Calu3 (cell line): ENCODE measurements at regions of chr5 and their contacts with region 1.

Region 1: GRCh38 chr5:177390363-177391300 is 6.4 kb downstream of the SLC34A1 start:
- DNase-seq: peak; percentile 95
- H3K4me3 Mint-ChIP-seq: peak overlapping the region; percentile 51
- H3K27ac Mint-ChIP-seq: peak overlapping the region; percentile 82
- H3K4me1 Mint-ChIP-seq: peaks cover 38% of the 10 kb centered on the region
- H3K27me3 Mint-ChIP-seq: no peaks in the 10 kb centered on the region
- CTCF ChIP-seq: peak; percentile 99

Region 2: DNA sequence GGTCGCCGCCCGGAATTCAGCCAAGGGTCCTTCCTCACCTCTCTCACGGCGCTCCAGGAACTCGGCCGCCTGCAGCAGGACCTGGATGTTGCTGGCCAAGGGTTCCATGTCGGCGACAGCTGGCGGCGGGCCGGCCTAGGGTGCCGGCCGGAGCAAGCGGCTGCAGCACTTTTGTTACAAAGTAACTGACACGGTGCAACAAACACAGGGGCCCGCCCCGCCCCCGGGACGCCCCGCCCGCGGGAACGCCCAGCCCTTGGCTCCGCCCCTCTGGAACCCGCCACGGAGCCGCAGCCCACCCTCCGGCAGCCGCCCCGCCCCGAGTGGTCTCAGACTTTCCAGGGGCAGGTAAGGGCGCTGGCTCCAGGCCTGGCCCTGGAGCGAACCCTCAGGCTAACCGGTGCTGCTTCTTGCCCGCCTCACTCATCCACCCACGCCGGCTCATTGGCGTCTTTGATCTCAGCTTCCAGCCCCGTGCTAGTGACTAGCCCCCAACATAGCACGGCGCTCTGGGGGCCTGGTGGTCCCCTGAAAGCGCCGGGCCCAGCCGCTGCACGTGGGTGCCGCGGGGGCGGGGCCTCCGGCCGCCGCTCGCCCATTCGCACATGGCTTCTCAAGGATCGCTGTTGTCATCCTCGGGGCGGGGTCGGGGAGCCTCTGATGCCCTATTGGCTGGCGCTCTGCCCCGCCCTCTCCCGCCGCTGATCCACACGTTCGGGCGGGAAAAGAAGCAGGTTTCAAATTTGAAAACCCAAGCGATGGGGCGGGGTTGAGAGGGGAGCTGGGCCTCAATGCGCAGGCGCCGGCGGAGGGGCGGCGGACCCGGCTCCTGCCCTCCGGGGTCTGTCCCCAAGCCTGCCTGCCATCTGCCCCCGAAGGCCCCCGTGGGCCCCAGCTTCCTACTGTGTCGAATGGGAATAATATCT is 78.6 kb before region 1 on chr5 and contains the start of gene MXD3:
- CTCF ChIA-PET with region 1: interaction called, 18 read pairs
- intact Hi-C with region 1: no loop called
- DNase-seq: peak; percentile 99
- H3K4me3 Mint-ChIP-seq: peak within 1 kb of the TSS; percentile 71
- H3K27ac Mint-ChIP-seq: peak within 1 kb of the TSS; percentile 79
- H3K4me1 Mint-ChIP-seq: peaks cover 42% of the 10 kb centered on the region
- H3K27me3 Mint-ChIP-seq: no peaks in the 10 kb centered on the region
- CTCF ChIP-seq: no peak
- total RNA-seq, gene MXD3: 24.3 and 36.3 TPM in 2 replicates

Region 3: GRCh38 chr5:177351385-177352329 is 39.0 kb before region 1 on chr5 and contains the start of gene LMAN2:
- CTCF ChIA-PET with region 1: interaction called, 11 read pairs
- intact Hi-C with region 1: no loop called
- DNase-seq: peak; percentile 94
- H3K4me3 Mint-ChIP-seq: peak within 1 kb of the TSS; percentile 86
- H3K27ac Mint-ChIP-seq: peak within 1 kb of the TSS; percentile 96
- H3K4me1 Mint-ChIP-seq: peaks cover 57% of the 10 kb centered on the region
- H3K27me3 Mint-ChIP-seq: no peaks in the 10 kb centered on the region
- CTCF ChIP-seq: no peak
- total RNA-seq, gene LMAN2: 278 and 305 TPM in 2 replicates

Region 4: DNA sequence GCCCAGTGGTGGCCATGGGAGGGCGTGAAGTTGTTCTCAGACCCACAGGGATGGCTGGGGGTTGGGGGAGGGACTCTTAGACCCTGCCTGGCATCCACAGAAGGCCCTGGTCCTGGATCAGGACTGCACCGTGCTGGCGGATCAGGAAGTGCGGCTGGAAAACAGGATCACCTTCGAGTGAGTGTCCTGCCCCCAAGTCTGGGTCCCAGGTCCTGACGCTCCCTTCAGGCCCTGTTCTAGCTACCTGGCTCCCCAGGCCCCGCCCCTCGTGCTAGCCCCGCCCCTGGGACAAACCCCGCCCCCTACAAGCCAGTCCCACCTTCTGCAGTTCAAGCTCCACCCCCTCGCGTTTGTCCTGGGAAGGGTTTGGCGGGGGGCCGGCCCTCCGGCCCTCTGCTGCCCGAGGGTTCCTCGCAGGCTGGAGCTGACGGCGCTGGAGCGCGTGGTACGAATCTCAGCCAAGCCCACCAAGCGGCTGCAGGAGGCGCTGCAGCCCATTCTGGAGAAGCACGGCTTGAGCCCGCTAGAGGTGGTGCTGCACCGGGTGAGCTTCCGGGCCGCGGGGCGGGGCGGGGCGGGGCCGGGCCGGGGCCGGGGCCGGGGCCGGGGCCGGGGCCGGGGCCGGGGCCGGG is 20.0 kb before region 1 on chr5:
- CTCF ChIA-PET with region 1: interaction called, 46 read pairs
- intact Hi-C with region 1: no loop called
- DNase-seq: peak; percentile 78
- H3K4me3 Mint-ChIP-seq: peak overlapping the region; percentile 53
- H3K27ac Mint-ChIP-seq: no peak overlapping the region
- H3K4me1 Mint-ChIP-seq: peaks cover 20% of the 10 kb centered on the region
- H3K27me3 Mint-ChIP-seq: no peaks in the 10 kb centered on the region
- CTCF ChIP-seq: peak; percentile 16

Region 5: GRCh38 chr5:177403792-177404640 is 13.4 kb after region 1 on chr5:
- CTCF ChIA-PET with region 1: interaction called, 94 read pairs
- intact Hi-C with region 1: no loop called
- DNase-seq: peak; percentile 92
- H3K4me3 Mint-ChIP-seq: peak overlapping the region; percentile 77
- H3K27ac Mint-ChIP-seq: peak overlapping the region; percentile 67
- H3K4me1 Mint-ChIP-seq: peaks cover 9% of the 10 kb centered on the region
- H3K27me3 Mint-ChIP-seq: no peaks in the 10 kb centered on the region
- CTCF ChIP-seq: peak; percentile 90

Region 6: GRCh38 chr5:177446200-177447065 is 55.8 kb after region 1 on chr5 and contains the start of gene PRR7:
- CTCF ChIA-PET with region 1: interaction called, 19 read pairs
- intact Hi-C with region 1: no loop called
- DNase-seq: peak; percentile 88
- H3K4me3 Mint-ChIP-seq: peak within 1 kb of the TSS; percentile 70
- H3K27ac Mint-ChIP-seq: peak within 1 kb of the TSS; percentile 81
- H3K4me1 Mint-ChIP-seq: peaks cover 22% of the 10 kb centered on the region
- H3K27me3 Mint-ChIP-seq: no peaks in the 10 kb centered on the region
- CTCF ChIP-seq: no peak
- total RNA-seq, gene PRR7: 25.2 and 27.6 TPM in 2 replicates

Region 7: GRCh38 chr5:177497292-177498033 is 106.8 kb after region 1 on chr5 and contains the start of gene PDLIM7:
- CTCF ChIA-PET with region 1: interaction called, 9 read pairs
- intact Hi-C with region 1: loop called (anchors 1 kb)
- DNase-seq: peak; percentile 98
- H3K4me3 Mint-ChIP-seq: peak within 1 kb of the TSS; percentile 68
- H3K27ac Mint-ChIP-seq: peak within 1 kb of the TSS; percentile 78
- H3K4me1 Mint-ChIP-seq: peaks cover 32% of the 10 kb centered on the region
- H3K27me3 Mint-ChIP-seq: peaks cover 20% of the 10 kb centered on the region
- CTCF ChIP-seq: peak; percentile 31
- total RNA-seq, gene PDLIM7: 400 and 420 TPM in 2 replicates